IMR-90 (cell line): ENCODE measurements at regions of chr6 and their contacts with region 1.

Region 1: DNA sequence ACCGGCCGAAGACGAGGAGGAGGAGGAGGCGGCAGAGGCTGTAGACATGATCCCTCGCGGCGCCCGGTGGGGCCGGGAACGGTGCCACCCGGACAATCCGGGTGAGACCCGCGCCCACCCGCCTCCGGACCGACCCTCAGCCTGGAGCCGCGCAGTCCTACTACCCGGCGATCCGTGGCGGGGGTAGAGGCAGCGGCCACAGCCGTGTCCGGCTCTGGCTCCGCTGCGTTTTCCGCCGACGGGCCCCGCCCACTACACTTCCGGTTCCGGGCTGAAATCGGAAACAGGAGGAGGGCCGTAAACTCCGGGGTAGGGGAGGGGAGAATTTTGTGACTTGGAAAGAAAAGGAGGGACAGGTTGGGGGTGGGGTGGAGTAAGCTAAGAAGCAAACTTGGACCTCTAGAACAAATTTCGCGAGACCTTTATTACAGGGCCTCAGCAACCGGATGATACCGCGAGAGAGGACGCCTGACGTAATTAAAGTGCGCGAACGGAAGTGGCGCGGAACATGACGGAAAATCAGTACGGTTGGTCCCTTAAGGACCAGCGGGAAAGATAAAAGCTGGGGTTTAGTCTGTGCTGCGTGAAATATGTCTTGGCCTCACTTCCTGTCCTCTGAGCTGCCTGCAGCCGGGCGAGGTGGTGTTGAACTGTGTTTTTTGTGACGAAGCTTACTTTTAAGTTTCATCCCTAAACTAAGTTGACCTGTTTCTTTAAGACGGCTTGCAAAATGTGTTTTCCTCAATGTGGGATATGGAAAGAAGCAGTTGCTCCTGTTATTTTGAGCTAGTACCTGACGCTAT is at the start of gene MAP3K7:
- DNase-seq: peak; percentile 97
- ATAC-seq: peak; percentile 95
- H3K4me3 ChIP-seq: peak within 1 kb of the TSS; percentile 92
- H3K27ac ChIP-seq: peak within 1 kb of the TSS; percentile 50
- H3K4me1 ChIP-seq: peaks cover 6% of the 10 kb centered on the region
- H3K27me3 ChIP-seq: no peaks in the 10 kb centered on the region
- CTCF ChIP-seq: no peak
- POLR2A ChIP-seq: peak; percentile 93
- RAD21 ChIP-seq: no peak
- total RNA-seq, gene MAP3K7: 29.9 and 40.8 TPM in 2 replicates

Region 2: GRCh38 chr6:90643381-90643780 is 56.3 kb after region 1 on chr6:
- CTCF ChIA-PET with region 1: no interaction called
- POLR2A ChIA-PET with region 1: no interaction called
- dilution Hi-C with region 1: no loop called
- in situ Hi-C with region 1: no loop called
- intact Hi-C with region 1: no loop called
- DNase-seq: no peak
- ATAC-seq: no peak
- H3K4me3 ChIP-seq: no peak overlapping the region
- H3K27ac ChIP-seq: no peak overlapping the region
- H3K4me1 ChIP-seq: no peaks in the 10 kb centered on the region
- H3K27me3 ChIP-seq: no peaks in the 10 kb centered on the region
- CTCF ChIP-seq: no peak
- POLR2A ChIP-seq: no peak
- RAD21 ChIP-seq: no peak

Region 3: GRCh38 chr6:91506551-91506950 is 919.5 kb after region 1 on chr6:
- CTCF ChIA-PET with region 1: no interaction called
- POLR2A ChIA-PET with region 1: interaction called, 18 read pairs
- dilution Hi-C with region 1: no loop called
- in situ Hi-C with region 1: no loop called
- intact Hi-C with region 1: no loop called
- DNase-seq: no peak
- ATAC-seq: no peak
- H3K4me3 ChIP-seq: no peak overlapping the region
- H3K27ac ChIP-seq: no peak overlapping the region
- H3K4me1 ChIP-seq: no peaks in the 10 kb centered on the region
- H3K27me3 ChIP-seq: no peaks in the 10 kb centered on the region
- CTCF ChIP-seq: no peak
- POLR2A ChIP-seq: no peak
- RAD21 ChIP-seq: no peak